Heart right ventricle (tissue), 16 donors: ENCODE measurements at regions of chr1 and their contacts with region 1.

Region 1: GRCh38 chr1:202765721-202766120 is 42.5 kb downstream of the KDM5B start:
- DNase-seq: no peak
- ATAC-seq: no peak
- H3K4me3 ChIP-seq: no peak overlapping the region
- H3K27ac ChIP-seq: no peak overlapping the region
- H3K4me1 ChIP-seq: peaks cover 0 to 5% (median 0%) of the 10 kb centered on the region in 9 donors
- H3K27me3 ChIP-seq: no peaks in the 10 kb centered on the region
- CTCF ChIP-seq: no peak

Region 2: GRCh38 chr1:202710070-202711045 is 55.4 kb before region 1 on chr1 and contains the start of gene SYT2:
- intact Hi-C with region 1: no loop called
- DNase-seq: no peak
- ATAC-seq: peak in 6 of 8 donors; percentile 30 to 65 (median 50)
- H3K4me3 ChIP-seq: peak within 1 kb of the TSS; percentile 11 to 45 (median 34)
- H3K27ac ChIP-seq: no peak within 1 kb of the TSS
- H3K4me1 ChIP-seq: peaks cover 0 to 19% (median 15%) of the 10 kb centered on the region in 9 donors
- H3K27me3 ChIP-seq: peaks cover 7 to 98% (median 65%) of the 10 kb centered on the region in 7 donors
- CTCF ChIP-seq: no peak
- total RNA-seq, gene SYT2: 0.02 TPM in 1 of 10 donors, not detected in the others

Region 3: DNA sequence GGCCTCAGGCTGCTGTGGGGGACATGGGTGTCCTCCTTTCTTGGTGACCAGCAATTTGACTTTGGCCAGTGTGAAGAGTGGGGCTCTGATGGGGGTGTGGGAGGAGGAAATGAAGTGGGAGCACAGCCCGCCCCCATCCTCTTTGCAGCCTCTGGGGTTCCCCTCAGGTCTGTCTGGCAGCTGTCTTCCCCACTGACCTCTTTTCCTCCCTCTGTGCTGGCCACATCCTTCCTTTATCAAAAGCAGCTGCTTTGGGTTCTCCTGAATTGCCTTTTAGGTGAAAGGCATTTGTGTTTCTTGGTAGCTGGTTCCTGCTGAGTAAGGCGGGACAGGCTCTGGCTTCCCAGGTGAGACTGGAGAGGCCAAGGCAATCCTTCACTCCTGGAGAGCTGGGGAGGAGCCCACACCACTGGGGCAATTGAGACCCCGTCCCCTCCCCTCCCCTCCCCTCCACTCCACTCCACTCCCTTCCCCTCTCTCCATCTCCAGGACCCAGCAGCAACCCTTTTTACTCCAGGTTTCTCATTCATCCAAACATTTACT is 69.9 kb after region 1 on chr1:
- intact Hi-C with region 1: no loop called
- DNase-seq: no peak
- ATAC-seq: no peak
- H3K4me3 ChIP-seq: no peak overlapping the region
- H3K27ac ChIP-seq: no peak overlapping the region
- H3K4me1 ChIP-seq: peaks cover 0 to 22% (median 0%) of the 10 kb centered on the region in 9 donors
- H3K27me3 ChIP-seq: peaks cover 0 to 15% (median 0%) of the 10 kb centered on the region in 7 donors
- CTCF ChIP-seq: no peak

Region 4: DNA sequence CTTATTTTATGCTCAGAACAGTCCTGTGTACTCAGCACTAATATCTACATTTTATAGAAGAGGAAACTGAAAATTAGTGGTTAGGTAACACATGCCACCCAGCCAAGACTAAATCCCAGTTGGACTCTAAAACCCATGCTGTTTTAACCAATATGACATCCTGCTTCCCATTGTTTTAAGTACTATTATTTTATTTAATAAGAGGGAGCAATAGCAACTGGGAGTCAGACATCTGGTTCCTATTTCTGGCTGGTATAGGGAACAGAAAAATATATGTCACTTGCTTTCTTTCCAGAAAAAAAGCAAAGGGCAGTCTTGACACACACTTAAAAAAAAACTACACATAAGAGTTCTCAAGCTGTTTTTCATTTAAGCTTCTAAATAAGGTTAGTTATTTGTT is 149.4 kb after region 1 on chr1:
- intact Hi-C with region 1: loop called in 1 of 10 experiments (anchors 10 kb)
- DNase-seq: no peak
- ATAC-seq: no peak
- H3K4me3 ChIP-seq: no peak overlapping the region
- H3K27ac ChIP-seq: no peak overlapping the region
- H3K4me1 ChIP-seq: no peaks in the 10 kb centered on the region
- H3K27me3 ChIP-seq: no peaks in the 10 kb centered on the region
- CTCF ChIP-seq: no peak

Region 5: DNA sequence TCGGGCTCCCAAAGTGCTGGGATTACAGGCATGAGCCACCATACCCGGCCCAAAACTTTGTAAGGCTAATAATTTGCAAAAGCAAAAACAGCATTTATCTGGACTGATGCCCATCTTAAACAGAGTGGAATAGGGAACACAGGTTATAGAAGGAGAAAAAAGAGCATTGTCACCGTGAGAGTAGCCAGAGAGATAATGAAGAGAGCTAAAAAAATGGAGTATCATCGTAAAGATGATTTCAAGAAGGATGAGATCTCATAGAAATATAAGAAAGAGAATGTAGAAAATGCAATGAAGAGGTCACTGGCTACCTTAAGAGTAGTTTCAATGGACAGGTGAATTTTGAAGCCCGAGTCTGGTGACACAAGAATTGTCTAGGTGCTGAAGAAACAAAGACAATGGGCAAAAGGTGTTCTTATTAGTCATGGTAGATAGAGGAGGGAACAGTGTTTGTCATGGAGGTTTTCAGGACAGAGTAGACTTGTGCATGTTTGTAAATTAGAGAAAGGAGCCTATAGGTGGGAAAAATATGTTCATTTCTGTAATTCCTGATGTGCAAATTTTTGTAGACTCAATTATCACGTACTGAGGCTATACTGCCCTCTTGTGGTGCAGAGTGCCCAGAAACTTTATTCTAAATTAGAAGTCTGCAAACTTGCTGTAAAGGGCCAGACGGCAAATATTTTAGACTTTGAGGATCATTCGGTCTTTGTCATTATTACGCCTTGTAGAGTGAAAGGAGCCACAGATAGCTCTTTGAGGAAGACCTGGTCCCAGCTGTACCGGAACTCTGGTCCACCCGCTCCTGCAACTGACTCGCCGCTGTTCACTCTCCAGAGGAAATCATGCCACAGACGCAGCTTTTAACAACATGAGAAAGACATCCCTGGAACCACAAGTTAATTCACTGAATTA is 233.4 kb after region 1 on chr1:
- intact Hi-C with region 1: loop called in 2 of 10 experiments (anchors 10 kb)
- DNase-seq: peak in 1 of 2 donors; percentile 44
- ATAC-seq: peak in 2 of 8 donors; percentile 10 to 22
- H3K4me3 ChIP-seq: no peak overlapping the region
- H3K27ac ChIP-seq: no peak overlapping the region
- H3K4me1 ChIP-seq: peaks cover 0 to 6% (median 0%) of the 10 kb centered on the region in 9 donors
- H3K27me3 ChIP-seq: peaks cover 0 to 23% (median 16%) of the 10 kb centered on the region in 7 donors
- CTCF ChIP-seq: peak; percentile 70 to 87 (median 81)